ENCODE measurements at regions of chr6 and their contacts with region 1.

Region 1: GRCh38 chr6:73451223-73452107 is 632 bp downstream of the CGAS start:
- DNase-seq: peak; percentile 41 to 64 (median 49)
- H3K4me3 ChIP-seq: peak overlapping the region; percentile 97 to 98
- H3K4me3 Mint-ChIP-seq: peak overlapping the region; percentile 90 to 99 (median 97)
- H3K27ac ChIP-seq: peak overlapping the region; percentile 92
- H3K27ac Mint-ChIP-seq: peak overlapping the region; percentile 88 to 97 (median 92)
- H3K4me1 ChIP-seq: peaks cover 32% of the 10 kb centered on the region
- H3K4me1 Mint-ChIP-seq: peaks cover 14 to 44% (median 24%) of the 10 kb centered on the region in 4 donors
- H3K27me3 ChIP-seq: no peaks in the 10 kb centered on the region
- H3K27me3 Mint-ChIP-seq: no peaks in the 10 kb centered on the region

Region 2: DNA sequence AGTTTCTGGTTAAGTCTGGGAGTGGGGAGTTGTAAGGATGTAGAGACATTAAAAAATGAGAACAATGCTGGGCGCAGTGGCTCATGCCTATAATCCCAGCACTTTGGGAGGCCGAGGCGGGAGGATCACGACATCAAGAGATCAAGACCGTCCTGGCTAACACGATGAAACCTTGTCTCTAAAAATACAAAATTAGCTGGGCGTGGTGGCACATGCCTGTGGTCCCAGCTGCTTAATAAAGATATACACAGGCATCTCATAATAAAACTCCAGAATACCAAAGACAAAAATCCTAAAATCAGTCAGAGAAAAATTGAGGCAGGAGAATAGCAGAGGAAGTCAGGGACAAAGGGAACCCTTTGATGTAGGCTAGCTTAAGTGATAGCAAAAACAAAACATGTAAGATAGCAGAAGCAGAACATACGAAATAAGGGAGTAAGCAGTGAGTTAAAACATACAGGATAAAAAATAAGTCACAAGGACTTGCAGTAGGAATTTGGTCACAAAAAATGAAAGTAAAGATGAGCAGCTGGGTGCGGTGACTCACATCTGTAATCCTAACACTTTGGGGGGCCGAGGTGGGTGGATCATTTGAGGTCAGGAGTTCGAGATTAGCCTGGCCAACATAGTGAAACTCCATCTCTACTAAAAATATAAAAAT is 33.3 kb before region 1 on chr6:
- CTCF ChIA-PET with region 1: interaction called, 4 read pairs
- POLR2A ChIA-PET with region 1: interaction called, 22 read pairs
- intact Hi-C with region 1: loop called (anchors 1 kb)
- DNase-seq: no peak
- H3K4me3 ChIP-seq: no peak overlapping the region
- H3K4me3 Mint-ChIP-seq: peak overlapping the region in 3 of 8 donors; percentile 15 to 61 (median 43)
- H3K27ac ChIP-seq: no peak overlapping the region
- H3K27ac Mint-ChIP-seq: peak overlapping the region; percentile 35 to 90 (median 84)
- H3K4me1 ChIP-seq: peaks cover 26% of the 10 kb centered on the region
- H3K4me1 Mint-ChIP-seq: peaks cover 21 to 29% (median 22%) of the 10 kb centered on the region in 4 donors
- H3K27me3 ChIP-seq: no peaks in the 10 kb centered on the region
- H3K27me3 Mint-ChIP-seq: no peaks in the 10 kb centered on the region